Activated B cell treated with CpG ODN at 0.5 μM for 24 hours (primary cell): ENCODE measurements at regions of chr17 and their contacts with region 1.

Region 1: DNA sequence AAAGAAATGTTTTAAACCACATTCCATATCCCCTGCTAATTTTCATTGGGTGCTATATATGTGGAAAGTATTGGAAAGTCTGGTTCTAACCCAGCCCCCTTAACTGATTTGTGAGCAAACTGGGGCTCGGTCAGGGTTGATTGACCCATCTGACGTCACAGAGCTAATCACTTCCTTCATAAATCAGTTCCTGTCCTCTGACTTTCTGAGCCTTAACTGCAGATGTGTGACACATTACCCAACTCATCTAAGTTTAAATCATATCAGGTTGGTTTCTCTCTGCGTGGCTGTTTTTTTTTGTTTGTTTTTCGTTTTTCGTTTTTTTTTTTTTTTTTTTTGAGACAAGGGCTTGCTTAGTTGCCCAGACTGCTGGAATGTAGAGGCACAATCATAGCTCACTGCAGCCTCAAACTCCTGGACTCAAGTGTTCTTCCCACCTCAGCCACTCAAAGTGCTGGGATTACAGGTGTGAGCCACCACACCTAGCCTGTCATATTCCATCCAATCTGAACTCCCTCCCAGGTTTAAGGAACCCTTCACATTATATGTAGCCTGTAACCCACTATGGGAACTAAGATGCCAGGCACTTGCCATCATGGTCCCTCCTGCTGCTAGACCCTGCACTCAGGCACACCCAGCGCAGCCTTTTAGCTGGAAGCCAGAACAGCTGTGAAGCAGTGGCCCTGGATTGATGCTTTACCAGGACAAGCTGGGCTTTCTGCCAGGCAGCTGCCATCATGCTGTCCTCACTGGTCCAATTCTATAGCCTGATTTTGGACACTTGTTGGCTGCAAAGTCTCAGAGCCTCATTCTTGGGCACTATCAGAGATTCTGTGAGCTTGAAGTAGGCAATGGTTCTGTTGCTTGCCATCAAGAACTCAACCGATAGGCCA is 6.9 kb upstream of the BPTF start:
- DNase-seq: no peak
- ATAC-seq: peak; percentile 63
- H3K4me3 Mint-ChIP-seq: peak overlapping the region; percentile 76
- H3K27ac Mint-ChIP-seq: peak overlapping the region; percentile 90
- H3K4me1 Mint-ChIP-seq: peaks cover 81% of the 10 kb centered on the region
- H3K27me3 Mint-ChIP-seq: no peaks in the 10 kb centered on the region
- CTCF ChIP-seq: no peak

Region 2: GRCh38 chr17:67376737-67377487 is 441.4 kb before region 1 on chr17 and contains the start of gene PITPNC1:
- CTCF ChIA-PET with region 1: no interaction called
- POLR2A ChIA-PET with region 1: interaction called, 7 read pairs
- intact Hi-C with region 1: loop called (anchors 5 kb)
- DNase-seq: peak; percentile 77
- ATAC-seq: peak; percentile 74
- H3K4me3 Mint-ChIP-seq: peak within 1 kb of the TSS; percentile 87
- H3K27ac Mint-ChIP-seq: peak within 1 kb of the TSS; percentile 71
- H3K4me1 Mint-ChIP-seq: peaks cover 26% of the 10 kb centered on the region
- H3K27me3 Mint-ChIP-seq: no peaks in the 10 kb centered on the region
- CTCF ChIP-seq: no peak
- total RNA-seq, gene PITPNC1: 15.2 and 19.3 TPM in 2 replicates

Region 3: GRCh38 chr17:67717624-67718329 is 100.6 kb before region 1 on chr17 and contains the start of gene NOL11:
- CTCF ChIA-PET with region 1: no interaction called
- POLR2A ChIA-PET with region 1: interaction called, 10 read pairs
- intact Hi-C with region 1: loop called (anchors 1 kb)
- DNase-seq: peak; percentile 98
- ATAC-seq: peak; percentile 94
- H3K4me3 Mint-ChIP-seq: peak within 1 kb of the TSS; percentile 100
- H3K27ac Mint-ChIP-seq: peak within 1 kb of the TSS; percentile 99
- H3K4me1 Mint-ChIP-seq: peaks cover 30% of the 10 kb centered on the region
- H3K27me3 Mint-ChIP-seq: no peaks in the 10 kb centered on the region
- CTCF ChIP-seq: no peak
- total RNA-seq, gene NOL11: 67.9 and 70.6 TPM in 2 replicates

Region 4: GRCh38 chr17:67800495-67800928 is 17.8 kb before region 1 on chr17:
- CTCF ChIA-PET with region 1: interaction called, 33 read pairs
- POLR2A ChIA-PET with region 1: interaction called, 70 read pairs
- intact Hi-C with region 1: loop called (anchors 1 kb)
- DNase-seq: peak; percentile 68
- ATAC-seq: peak; percentile 94
- H3K4me3 Mint-ChIP-seq: peak overlapping the region; percentile 11
- H3K27ac Mint-ChIP-seq: peak overlapping the region; percentile 19
- H3K4me1 Mint-ChIP-seq: peaks cover 17% of the 10 kb centered on the region
- H3K27me3 Mint-ChIP-seq: no peaks in the 10 kb centered on the region
- CTCF ChIP-seq: no peak

Region 5: GRCh38 chr17:69117855-69118784 is 1299.8 kb after region 1 on chr17:
- CTCF ChIA-PET with region 1: no interaction called
- POLR2A ChIA-PET with region 1: no interaction called
- intact Hi-C with region 1: loop called (anchors 5 kb)
- DNase-seq: no peak
- ATAC-seq: peak; percentile 41
- H3K4me3 Mint-ChIP-seq: peak overlapping the region; percentile 42
- H3K27ac Mint-ChIP-seq: peak overlapping the region; percentile 79
- H3K4me1 Mint-ChIP-seq: peaks cover 49% of the 10 kb centered on the region
- H3K27me3 Mint-ChIP-seq: no peaks in the 10 kb centered on the region
- CTCF ChIP-seq: no peak